AG04449 (cell line): ENCODE measurements at regions of chr1 and their contacts with region 1.

Region 1: DNA sequence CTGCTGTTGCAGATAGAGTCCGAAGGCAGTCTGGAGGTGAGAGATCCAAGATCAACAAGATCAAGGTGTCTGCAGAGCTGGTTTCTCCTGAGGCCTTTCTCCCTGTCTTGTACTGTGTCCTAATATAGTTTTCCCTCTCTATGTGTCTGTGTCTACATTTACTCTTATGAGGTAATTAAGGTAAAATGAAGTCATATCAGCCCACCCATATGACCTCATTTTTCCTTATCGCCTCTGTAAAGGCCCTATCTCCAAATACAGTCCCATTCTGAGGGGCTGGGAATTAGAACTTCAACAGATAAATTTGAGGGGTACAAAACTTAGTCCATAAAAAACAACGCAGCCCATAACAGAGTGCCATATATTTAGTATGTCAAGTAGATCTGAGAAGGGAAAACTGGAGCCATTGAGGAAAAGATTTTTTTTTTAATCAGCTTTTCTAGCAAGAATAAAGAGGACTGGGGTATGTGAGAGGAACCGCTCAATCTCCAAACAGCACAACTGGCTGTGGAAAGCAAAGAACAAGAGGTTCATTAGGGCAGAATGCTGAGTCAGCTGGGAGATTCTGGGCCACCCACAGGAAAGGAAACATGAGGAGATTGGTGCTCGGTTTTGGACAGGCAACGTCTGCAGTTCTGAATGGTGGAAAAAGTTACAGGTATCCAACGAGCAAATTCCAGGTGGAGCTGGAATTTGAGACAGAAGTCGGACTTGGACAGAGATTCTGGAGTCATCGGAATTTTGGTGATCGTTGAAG is 65.7 kb downstream of the MAP3K21 start:
- DNase-seq: no peak
- H3K4me3 ChIP-seq: no peak overlapping the region
- CTCF ChIP-seq: no peak

Region 2: GRCh38 chr1:232904566-232904965 is 488.7 kb before region 1 on chr1:
- CTCF ChIA-PET with region 1: no interaction called
- POLR2A ChIA-PET with region 1: no interaction called
- DNase-seq: peak; percentile 23
- H3K4me3 ChIP-seq: no peak overlapping the region
- CTCF ChIP-seq: no peak

Region 3: GRCh38 chr1:233381778-233382177 is 11.5 kb before region 1 on chr1:
- CTCF ChIA-PET with region 1: interaction called, 13 read pairs
- POLR2A ChIA-PET with region 1: no interaction called
- DNase-seq: no peak
- H3K4me3 ChIP-seq: no peak overlapping the region
- CTCF ChIP-seq: no peak

Region 4: DNA sequence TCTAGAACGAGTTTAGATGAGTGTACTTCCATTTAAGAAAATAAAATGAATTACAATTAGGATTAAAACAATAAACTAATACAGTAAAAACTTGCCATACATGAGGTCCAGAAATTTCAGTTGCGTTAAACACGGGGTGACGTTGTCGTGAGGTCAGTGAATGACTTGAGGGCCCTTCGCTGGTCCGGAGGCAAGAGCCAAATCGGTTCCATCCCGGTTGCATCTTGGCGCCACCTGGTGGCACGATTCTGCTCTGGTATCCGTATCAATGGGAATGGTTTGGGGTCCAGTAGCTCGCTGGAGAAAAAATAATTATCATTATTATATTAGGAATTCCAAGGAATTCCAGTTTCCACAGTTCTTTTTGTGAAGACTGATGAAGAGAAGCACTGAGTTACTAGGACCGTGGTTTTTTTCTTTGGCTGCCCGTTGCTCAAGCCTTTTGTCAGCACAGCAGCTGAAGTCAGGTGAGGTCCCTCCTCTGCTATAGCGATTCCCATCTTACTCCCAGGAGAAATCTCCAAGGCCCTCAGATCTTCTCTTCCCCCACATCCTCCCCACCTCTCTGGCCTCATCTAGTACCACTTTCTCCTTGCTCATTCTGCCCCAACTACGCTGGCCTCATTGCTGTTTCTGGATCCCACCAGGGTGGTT is 672.7 kb after region 1 on chr1:
- CTCF ChIA-PET with region 1: interaction called, 19 read pairs
- POLR2A ChIA-PET with region 1: no interaction called
- DNase-seq: no peak
- H3K4me3 ChIP-seq: no peak overlapping the region
- CTCF ChIP-seq: peak; percentile 81